Panc1 (cell line): ENCODE measurements at regions of chrX and their contacts with region 1.

Region 1: DNA sequence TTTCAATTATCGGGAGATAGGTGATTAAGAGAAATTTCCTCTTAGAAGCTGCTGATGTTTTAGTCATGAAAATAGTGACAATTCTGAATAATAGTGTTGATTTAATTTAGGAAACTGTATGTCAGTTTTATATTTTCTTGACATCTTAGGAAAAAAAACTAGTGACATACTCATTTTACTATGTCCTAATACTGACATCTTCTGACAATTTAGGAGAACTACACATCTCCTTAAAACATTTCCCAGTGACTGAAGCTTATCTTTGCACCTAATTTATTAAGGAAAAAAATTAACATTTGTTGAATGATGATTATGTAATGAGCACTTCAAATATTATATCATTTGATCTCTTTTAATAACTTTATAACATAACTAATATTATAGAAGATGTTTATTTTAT is 42.0 kb upstream of the RBMXL3 start:
- DNase-seq: no peak
- ATAC-seq: no peak
- H3K4me3 ChIP-seq: no peak overlapping the region
- H3K27ac ChIP-seq: no peak overlapping the region
- H3K4me1 ChIP-seq: no peaks in the 10 kb centered on the region
- H3K27me3 ChIP-seq: no peaks in the 10 kb centered on the region
- CTCF ChIP-seq: peak; percentile 39; the same call in 1 of the 2 replicates

Region 2: GRCh38 chrX:114626323-114626722 is 520.9 kb before region 1 on chrX:
- CTCF ChIA-PET with region 1: no interaction called
- POLR2A ChIA-PET with region 1: no interaction called
- in situ Hi-C with region 1: no loop called
- intact Hi-C with region 1: loop called (anchors 5 kb)
- DNase-seq: no peak
- ATAC-seq: no peak
- H3K4me3 ChIP-seq: no peak overlapping the region
- H3K27ac ChIP-seq: no peak overlapping the region
- H3K4me1 ChIP-seq: no peaks in the 10 kb centered on the region
- H3K27me3 ChIP-seq: no peaks in the 10 kb centered on the region
- CTCF ChIP-seq: peak; percentile 48; the same call in 1 of the 2 replicates

Region 3: DNA sequence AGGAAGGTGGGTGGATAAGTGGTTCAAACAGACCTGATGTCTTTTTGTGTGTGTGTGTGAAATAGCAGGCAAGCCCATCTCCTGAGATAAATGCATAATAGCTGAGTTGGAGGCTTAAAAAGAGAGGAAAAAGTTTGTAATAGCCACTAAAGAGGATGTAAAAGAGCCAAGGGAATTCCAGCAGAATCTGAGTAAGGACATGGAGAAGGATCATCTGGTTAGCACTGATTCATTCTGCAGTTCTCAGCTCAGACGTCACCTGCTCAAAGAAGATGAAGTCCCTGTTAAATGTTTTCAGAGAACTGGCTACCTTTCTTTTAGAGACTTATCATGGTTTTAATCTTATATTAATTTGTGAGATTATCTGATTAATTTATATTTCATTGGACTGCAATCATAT is 108.8 kb before region 1 on chrX:
- CTCF ChIA-PET with region 1: no interaction called
- POLR2A ChIA-PET with region 1: no interaction called
- in situ Hi-C with region 1: no loop called
- intact Hi-C with region 1: no loop called
- DNase-seq: no peak
- ATAC-seq: no peak
- H3K4me3 ChIP-seq: no peak overlapping the region
- H3K27ac ChIP-seq: no peak overlapping the region
- H3K4me1 ChIP-seq: no peaks in the 10 kb centered on the region
- H3K27me3 ChIP-seq: no peaks in the 10 kb centered on the region
- CTCF ChIP-seq: no peak

Region 4: GRCh38 chrX:116499780-116500179 is 1352.6 kb after region 1 on chrX:
- CTCF ChIA-PET with region 1: no interaction called
- POLR2A ChIA-PET with region 1: no interaction called
- in situ Hi-C with region 1: no loop called
- intact Hi-C with region 1: no loop called
- DNase-seq: no peak
- ATAC-seq: no peak
- H3K4me3 ChIP-seq: no peak overlapping the region
- H3K27ac ChIP-seq: no peak overlapping the region
- H3K4me1 ChIP-seq: no peaks in the 10 kb centered on the region
- H3K27me3 ChIP-seq: no peaks in the 10 kb centered on the region
- CTCF ChIP-seq: no peak